GM18951 (cell line): ENCODE measurements at regions of chr9 and their contacts with region 1.

Region 1: GRCh38 chr9:133149126-133150107 is 14.3 kb downstream of the GBGT1 start:
- POLR2A ChIP-seq: peak; percentile 68

Region 2: DNA sequence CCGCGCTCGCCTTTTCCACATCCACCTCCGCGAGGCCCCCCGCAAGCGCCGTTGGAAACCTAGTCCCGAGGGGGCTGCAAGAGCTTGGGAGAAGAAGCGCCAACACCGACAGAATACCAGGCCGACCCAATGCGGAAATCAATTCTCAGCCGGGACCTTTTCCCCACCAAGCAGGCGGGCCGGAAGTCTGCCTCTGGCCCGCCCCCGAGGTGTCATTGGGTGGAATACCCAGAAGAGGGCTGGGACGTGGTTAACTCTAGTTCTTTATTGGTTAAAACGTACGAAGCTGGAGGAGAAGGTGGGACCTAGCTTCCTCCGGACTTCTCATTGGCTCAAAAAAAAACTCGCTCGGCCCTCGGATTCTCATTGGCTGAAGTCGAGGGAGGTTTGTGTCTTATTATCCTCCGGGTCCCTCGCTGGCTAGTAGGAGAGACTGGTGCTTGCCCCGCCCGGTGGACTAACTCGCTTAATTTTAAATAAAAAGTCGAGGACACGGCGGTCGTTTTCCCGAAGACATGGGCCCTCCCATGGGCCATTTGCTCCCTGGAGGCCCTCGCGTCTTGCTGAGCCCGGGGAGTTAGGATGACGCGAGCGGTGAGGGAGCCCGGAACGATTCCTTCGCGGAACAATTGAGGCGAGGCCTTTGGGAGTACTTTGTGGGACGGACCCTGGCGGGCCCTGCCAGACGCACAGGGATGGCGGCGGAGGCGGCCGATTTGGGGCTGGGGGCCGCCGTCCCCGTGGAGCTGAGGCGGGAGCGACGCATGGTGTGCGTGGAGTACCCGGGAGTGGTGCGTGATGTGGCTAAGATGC is 118.9 kb before region 1 on chr9 and contains the start of gene GTF3C5:
- in situ Hi-C with region 1: loop called (anchors 10 kb)
- POLR2A ChIP-seq: peak; percentile 88

Region 3: DNA sequence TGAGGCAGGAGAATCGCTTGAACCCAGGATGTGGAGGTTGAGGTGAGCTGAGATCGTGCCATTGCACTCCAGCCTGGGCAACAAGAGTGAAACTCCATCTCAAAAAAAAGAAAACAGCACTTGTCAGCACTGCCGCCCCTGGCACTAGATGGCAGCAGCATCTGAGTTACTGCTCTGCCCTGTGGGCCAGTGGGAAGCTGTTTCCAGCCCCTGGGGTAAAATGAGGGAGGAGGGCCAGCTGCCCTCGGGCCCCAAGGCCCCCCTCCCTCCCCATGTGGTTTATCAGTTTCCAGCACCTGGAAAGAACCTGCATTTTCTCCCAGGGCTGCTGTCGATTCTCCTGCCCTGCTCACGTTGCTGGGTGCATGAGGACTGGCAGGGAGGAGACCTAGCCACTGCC is 100.8 kb before region 1 on chr9:
- in situ Hi-C with region 1: no loop called
- POLR2A ChIP-seq: no peak

Region 4: GRCh38 chr9:133106511-133107244 is 42.7 kb before region 1 on chr9:
- in situ Hi-C with region 1: loop called (anchors 5 kb)
- POLR2A ChIP-seq: no peak

Region 5: GRCh38 chr9:133945314-133945975 is 796.0 kb after region 1 on chr9:
- in situ Hi-C with region 1: no loop called
- POLR2A ChIP-seq: peak; percentile 42